A673 (cell line): ENCODE measurements at regions of chr5 and their contacts with region 1.

Region 1: GRCh38 chr5:55936100-55936693 is 58.6 kb downstream of the IL6ST start:
- DNase-seq: peak; percentile 80
- H3K4me3 ChIP-seq: no peak overlapping the region
- H3K27ac ChIP-seq: no peak overlapping the region
- H3K4me1 ChIP-seq: no peaks in the 10 kb centered on the region
- H3K27me3 ChIP-seq: no peaks in the 10 kb centered on the region
- CTCF ChIP-seq: peak; percentile 97

Region 2: GRCh38 chr5:55895346-55895745 is 40.9 kb before region 1 on chr5:
- CTCF ChIA-PET with region 1: interaction called, 12 read pairs
- POLR2A ChIA-PET with region 1: no interaction called
- intact Hi-C with region 1: no loop called
- DNase-seq: no peak
- H3K4me3 ChIP-seq: no peak overlapping the region
- H3K27ac ChIP-seq: no peak overlapping the region
- H3K4me1 ChIP-seq: no peaks in the 10 kb centered on the region
- H3K27me3 ChIP-seq: no peaks in the 10 kb centered on the region
- CTCF ChIP-seq: no peak

Region 3: DNA sequence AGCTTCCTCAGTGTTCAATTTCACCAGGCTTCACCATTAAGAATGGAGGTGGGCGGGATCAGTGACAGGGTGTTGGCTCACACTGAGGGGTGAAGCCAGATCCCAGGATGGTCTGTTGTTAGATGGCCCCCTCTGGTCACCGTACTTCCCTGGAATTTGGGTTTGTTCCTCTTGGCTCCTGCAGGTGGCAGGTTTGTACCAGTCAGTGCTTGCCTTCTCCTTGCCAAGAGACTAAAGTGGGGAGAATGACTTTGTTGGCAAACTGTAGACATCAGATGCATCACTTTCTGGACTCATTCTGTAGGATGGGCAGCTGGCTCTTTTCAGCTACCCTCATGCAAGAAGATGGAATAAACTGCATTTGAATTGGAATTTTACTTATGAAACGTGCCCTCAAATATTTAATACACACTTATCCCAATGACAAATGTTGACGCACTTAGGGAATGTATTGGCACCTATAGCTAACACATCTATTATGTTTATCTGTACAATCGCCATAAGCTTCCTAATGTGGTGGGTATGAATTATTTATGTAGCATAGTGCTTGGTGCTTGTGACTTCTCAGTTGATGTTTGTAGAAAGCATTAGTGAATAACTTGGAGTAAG is 328.3 kb after region 1 on chr5:
- CTCF ChIA-PET with region 1: interaction called, 6 read pairs
- POLR2A ChIA-PET with region 1: no interaction called
- intact Hi-C with region 1: loop called (anchors 2 kb)
- DNase-seq: peak; percentile 70
- H3K4me3 ChIP-seq: no peak overlapping the region
- H3K27ac ChIP-seq: no peak overlapping the region
- H3K4me1 ChIP-seq: no peaks in the 10 kb centered on the region
- H3K27me3 ChIP-seq: no peaks in the 10 kb centered on the region
- CTCF ChIP-seq: peak; percentile 75

Region 4: DNA sequence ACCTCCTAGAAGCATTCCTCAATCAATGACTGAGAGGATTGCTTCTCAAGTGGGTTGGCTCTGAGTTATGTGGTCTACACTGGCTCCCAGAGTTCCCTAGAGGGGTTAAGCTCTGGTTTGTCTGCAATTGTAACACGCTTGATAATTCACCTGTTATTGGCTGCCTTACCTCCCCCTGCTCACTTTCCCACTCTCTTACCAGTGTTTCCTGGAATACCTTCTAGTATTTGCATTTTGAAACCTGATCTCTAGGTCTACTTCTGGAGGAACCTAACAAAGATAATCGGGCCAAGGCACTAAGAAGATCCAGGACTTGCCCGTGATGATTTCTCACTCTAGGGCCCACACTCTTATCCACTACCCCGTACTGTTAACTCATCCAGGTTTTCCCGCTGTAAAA is 769.0 kb after region 1 on chr5:
- CTCF ChIA-PET with region 1: no interaction called
- POLR2A ChIA-PET with region 1: no interaction called
- intact Hi-C with region 1: no loop called
- DNase-seq: no peak
- H3K4me3 ChIP-seq: no peak overlapping the region
- H3K27ac ChIP-seq: no peak overlapping the region
- H3K4me1 ChIP-seq: no peaks in the 10 kb centered on the region
- H3K27me3 ChIP-seq: peaks cover 38% of the 10 kb centered on the region
- CTCF ChIP-seq: no peak

Region 5: GRCh38 chr5:56717253-56717987 is 781.2 kb after region 1 on chr5:
- CTCF ChIA-PET with region 1: interaction called, 15 read pairs
- POLR2A ChIA-PET with region 1: no interaction called
- intact Hi-C with region 1: no loop called
- DNase-seq: no peak
- H3K4me3 ChIP-seq: no peak overlapping the region
- H3K27ac ChIP-seq: no peak overlapping the region
- H3K4me1 ChIP-seq: no peaks in the 10 kb centered on the region
- H3K27me3 ChIP-seq: peaks cover 4% of the 10 kb centered on the region
- CTCF ChIP-seq: no peak